ENCODE measurements at regions of chr7 and their contacts with region 1.

Region 1: DNA sequence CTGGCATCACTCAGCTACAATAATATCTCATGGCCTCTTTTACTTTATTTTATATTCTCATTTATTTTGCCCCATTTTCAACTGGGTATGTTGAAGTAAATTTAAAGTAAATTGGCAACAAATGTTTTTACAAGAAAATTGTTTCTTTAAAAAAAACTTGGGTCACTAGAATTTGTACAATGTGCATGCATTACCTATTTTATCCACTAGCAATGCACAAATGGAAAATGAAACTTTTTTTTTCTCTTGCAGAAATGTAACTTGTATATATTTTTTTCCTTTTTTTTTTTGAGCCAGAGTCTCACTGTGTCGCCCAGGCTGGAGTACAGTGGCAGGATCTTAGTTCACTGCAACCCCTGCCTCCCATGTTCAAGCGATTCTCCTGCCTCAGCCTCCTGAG is 10.3 kb upstream of the H2AZ2 start:
- DNase-seq: no peak
- H3K4me3 ChIP-seq: no peak overlapping the region
- H3K27ac ChIP-seq: no peak overlapping the region
- H3K4me1 ChIP-seq: no peaks in the 10 kb centered on the region
- H3K27me3 ChIP-seq: no peaks in the 10 kb centered on the region
- CTCF ChIP-seq: no peak
- POLR2A ChIP-seq: no peak

Region 2: DNA sequence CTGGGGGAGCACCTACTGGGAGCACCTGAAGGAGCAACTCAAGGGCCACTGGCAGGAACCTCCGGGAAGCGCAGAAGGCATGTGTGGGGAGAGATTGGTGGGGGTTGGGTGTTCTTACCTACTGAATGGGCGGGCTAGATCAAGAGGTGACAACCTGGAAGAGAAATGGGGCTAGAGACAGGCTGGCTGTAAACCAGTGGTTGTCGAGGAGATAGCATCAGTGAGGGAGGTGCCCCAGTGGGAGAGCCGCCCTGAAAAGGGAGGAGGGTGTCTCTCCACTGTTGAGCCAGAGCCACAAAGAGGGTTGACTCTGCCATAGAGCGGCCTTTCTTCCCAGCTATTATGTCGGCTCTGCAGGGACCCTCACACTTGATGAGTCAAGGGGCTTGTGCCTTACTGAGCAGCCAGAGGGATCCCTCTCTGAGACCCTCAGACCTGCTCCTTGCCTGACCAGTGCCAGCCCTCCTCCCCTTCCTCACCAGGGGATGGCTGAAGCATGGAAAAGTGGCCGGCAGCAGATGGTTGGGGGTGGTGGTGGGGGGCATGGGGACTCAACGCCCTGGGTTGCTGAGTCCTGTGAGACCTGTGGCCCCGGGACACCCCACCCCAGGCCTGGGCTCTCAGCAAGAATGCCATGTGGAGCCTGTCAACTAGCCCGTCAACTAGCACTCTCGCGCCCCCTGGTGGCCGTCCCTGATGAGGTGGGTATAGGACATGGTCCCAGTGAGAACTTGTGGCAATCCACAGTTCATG is 63.6 kb after region 1 on chr7:
- intact Hi-C with region 1: loop called (anchors 5 kb)
- DNase-seq: no peak
- H3K4me3 ChIP-seq: no peak overlapping the region
- H3K27ac ChIP-seq: no peak overlapping the region
- H3K4me1 ChIP-seq: peaks cover 4% of the 10 kb centered on the region
- H3K27me3 ChIP-seq: no peaks in the 10 kb centered on the region
- CTCF ChIP-seq: peak; percentile 72 to 78 (median 73)
- POLR2A ChIP-seq: no peak

Region 3: DNA sequence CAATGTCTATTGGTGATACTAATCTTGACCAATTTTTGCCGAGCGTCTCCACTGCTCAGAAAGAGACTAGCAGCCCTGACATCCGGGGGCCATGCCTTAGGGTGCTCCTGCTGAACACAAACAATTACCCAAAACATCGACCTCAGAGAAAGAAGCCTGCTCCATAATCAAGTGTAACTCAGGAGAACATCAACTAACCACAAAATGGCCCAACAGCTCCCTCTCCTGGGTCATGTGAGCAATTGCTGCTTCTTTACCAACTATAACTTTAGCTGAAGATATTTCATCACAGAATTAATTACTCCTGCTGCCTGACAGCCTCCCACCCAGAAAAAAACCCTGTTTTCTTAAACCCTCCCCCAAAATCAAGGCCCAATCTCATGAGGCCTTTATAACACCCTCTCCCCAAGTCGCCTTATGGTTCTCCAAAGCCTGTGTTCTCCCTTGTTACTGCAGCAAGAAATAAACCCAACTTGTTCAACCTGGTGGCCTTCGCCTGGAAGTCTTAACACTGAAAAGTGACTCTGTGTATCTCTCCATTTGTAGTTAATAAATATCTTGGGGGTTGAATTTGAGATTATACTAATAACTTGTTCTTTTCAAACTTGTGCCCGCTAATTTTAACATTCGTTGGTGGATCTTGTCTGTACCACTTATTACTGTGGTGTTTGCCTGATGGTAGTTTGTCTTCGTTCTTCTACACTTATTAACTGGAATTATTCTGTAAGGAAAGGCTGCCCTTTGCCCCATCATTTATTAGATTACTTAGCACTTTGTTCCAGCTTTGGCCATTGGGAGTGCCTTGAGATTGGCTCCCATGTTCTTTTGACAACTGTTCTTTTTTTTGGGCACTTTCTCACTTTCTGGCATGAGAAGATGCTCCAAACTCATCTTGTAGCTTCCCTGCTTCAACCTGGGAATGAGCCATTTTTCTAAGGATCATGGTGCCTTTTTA is 278.2 kb after region 1 on chr7:
- intact Hi-C with region 1: loop called (anchors 10 kb)
- DNase-seq: no peak
- H3K4me3 ChIP-seq: no peak overlapping the region
- H3K27ac ChIP-seq: no peak overlapping the region
- H3K4me1 ChIP-seq: no peaks in the 10 kb centered on the region
- H3K27me3 ChIP-seq: no peaks in the 10 kb centered on the region
- CTCF ChIP-seq: peak; percentile 64 to 83 (median 68)
- POLR2A ChIP-seq: no peak